Ascending aorta (tissue), 2 donors: ENCODE measurements at regions of chr4 and their contacts with region 1.

Region 1: GRCh38 chr4:6327041-6327917 is 57.6 kb downstream of the WFS1 start:
- DNase-seq: peak in 1 of 2 donors; percentile 87
- H3K4me3 ChIP-seq: no peak overlapping the region
- H3K27ac ChIP-seq: no peak overlapping the region
- H3K4me1 ChIP-seq: no peaks in the 10 kb centered on the region
- H3K27me3 ChIP-seq: peaks cover 4% of the 10 kb centered on the region
- CTCF ChIP-seq: peak; percentile 92 to 96 (median 96)

Region 2: DNA sequence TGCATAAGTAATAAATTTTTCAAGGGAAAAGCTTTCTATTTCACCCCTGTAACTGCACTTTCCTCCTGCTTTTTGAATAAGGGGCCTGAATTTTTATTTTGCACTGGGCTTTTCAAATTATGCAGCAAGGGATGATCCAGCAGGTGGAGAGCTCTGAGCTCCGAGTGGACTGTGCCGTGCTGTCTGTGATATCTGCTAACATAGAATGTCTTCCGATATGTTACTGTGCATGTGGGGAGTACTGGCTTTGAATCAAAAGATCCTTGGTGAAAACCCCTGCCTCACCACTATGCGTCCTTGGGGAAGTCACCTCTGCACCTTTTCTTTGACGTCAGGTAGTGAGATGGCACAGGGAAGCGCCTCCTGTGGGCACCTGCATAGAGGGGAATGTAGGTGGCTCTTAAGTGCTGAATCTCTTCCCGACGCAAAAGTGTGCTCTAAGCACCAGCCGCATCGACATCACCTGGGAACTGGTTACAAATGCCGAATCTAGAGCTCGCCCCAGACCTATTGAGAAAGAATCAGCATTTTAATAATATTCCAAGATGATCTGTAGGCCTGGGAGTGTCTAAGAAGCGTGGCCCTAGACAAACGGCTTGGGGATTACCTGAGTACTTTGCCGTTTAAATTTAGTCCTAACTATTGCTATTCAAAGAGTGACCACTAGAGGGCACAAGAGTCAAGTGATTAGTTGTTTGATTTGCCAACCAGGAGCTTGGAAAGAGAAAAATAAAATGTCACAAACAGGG is 76.9 kb before region 1 on chr4:
- intact Hi-C with region 1: loop called (anchors 1 kb)
- DNase-seq: no peak
- H3K4me3 ChIP-seq: no peak overlapping the region
- H3K27ac ChIP-seq: no peak overlapping the region
- H3K4me1 ChIP-seq: no peaks in the 10 kb centered on the region
- H3K27me3 ChIP-seq: peaks cover under 1% of the 10 kb centered on the region
- CTCF ChIP-seq: peak; percentile 76 to 86 (median 76)

Region 3: GRCh38 chr4:6264225-6264540 is 63.1 kb before region 1 on chr4:
- intact Hi-C with region 1: loop called (anchors 1 kb)
- DNase-seq: no peak
- H3K4me3 ChIP-seq: no peak overlapping the region
- H3K27ac ChIP-seq: no peak overlapping the region
- H3K4me1 ChIP-seq: peaks cover 4% of the 10 kb centered on the region in 2 donors
- H3K27me3 ChIP-seq: no peaks in the 10 kb centered on the region
- CTCF ChIP-seq: peak; percentile 8 to 54 (median 44)